Posterior cingulate gyrus (tissue), 11 donors: ENCODE measurements at regions of chr9 and their contacts with region 1.

Region 1: GRCh38 chr9:90914868-90915483 is 113.4 kb downstream of the SYK start:
- DNase-seq: peak; percentile 38 to 96 (median 71)

Region 2: DNA sequence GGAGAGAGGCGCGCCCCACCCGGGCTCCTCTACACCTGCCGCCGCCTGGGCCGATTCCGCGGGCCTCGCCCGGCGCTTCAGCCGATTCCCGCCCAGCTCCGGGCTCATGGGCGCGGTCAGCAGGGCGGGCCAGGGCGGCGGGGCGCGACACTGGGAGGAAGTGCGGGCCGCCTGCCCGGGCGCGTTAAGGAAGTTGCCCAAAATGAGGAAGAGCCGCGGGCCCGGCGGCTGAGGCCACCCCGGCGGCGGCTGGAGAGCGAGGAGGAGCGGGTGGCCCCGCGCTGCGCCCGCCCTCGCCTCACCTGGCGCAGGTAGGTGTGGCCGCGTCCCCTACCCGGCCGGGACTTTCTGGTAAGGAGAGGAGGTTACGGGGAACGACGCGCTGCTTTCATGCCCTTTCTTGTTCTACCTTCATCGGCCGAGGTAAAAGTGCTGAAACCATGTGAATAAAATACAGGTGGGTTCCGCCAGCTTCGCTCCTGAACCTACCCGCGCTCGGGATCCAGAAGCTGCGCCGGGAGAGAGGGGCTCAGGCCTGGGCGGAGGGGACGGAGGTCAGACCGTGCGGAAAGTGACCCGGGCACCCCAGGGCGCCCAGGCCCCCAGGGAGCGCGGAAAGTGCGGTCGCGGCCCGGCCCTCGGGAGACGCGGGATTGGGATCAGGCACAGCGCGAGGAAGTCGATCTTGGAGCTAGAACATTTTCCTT is 113.2 kb before region 1 on chr9 and contains the start of gene SYK:
- intact Hi-C with region 1: no loop called
- DNase-seq: peak in 5 of 10 donors; percentile 11 to 86 (median 23)

Region 3: DNA sequence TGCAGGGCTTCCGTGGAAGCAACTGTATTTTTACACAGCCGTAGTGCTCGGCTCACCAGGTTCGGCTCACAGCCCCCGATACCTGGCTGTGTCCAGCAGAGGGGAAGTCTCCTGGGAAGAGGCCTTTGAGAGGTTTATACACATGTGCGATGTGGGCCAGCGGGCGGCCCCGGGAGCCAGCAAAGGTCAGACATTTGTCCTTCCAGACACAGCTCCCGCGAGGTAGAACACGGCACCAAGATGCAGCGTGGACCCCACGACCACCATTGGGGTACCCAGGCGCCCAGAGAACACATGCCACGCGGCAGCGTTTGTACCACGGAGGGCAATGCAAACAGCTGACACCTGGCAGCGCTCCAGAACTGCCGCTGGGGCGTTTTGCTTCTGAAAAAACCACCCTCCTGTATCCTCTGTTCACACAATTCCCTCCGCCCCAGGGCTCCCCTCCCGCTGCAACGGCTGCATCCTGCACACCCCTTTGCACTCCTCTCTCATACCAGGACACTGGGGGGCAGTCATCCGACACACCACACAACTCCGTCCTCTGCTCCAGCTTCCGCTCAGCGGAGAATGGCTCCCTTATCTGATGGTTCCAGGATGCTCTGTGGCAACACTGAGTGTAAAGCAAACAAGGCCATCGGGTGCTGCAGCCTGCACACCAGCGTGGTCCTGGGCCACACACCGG is 122.0 kb after region 1 on chr9:
- intact Hi-C with region 1: loop called (anchors 5 kb)
- DNase-seq: peak; percentile 64 to 97 (median 82)

Region 4: DNA sequence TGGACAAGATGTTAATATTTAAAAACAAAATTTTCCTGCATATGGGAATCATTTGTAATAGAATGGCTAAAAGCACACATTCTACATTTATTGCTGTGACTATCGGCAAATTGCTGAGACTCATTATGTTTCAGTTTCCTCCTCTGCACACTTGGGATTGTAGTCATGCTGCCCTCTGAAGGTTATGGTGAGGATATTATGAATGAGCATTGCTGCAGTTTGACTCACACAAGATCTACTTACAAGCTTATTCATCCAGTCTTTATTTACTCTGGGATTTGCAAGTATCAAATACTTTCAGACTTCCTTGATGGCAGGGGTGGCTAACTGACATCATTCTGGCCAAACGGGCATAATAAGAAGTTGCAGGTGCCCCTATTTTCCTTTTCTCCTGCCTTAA is 518.2 kb after region 1 on chr9:
- intact Hi-C with region 1: loop called (anchors 5 kb)
- DNase-seq: no peak

Region 5: GRCh38 chr9:91676046-91676445 is 761.1 kb after region 1 on chr9:
- intact Hi-C with region 1: loop called (anchors 5 kb)
- DNase-seq: no peak

Region 6: GRCh38 chr9:91727316-91727861 is 812.4 kb after region 1 on chr9:
- intact Hi-C with region 1: loop called (anchors 5 kb)
- DNase-seq: no peak